MCF 10A (cell line): ENCODE measurements at regions of chr17 and their contacts with region 1.

Region 1: DNA sequence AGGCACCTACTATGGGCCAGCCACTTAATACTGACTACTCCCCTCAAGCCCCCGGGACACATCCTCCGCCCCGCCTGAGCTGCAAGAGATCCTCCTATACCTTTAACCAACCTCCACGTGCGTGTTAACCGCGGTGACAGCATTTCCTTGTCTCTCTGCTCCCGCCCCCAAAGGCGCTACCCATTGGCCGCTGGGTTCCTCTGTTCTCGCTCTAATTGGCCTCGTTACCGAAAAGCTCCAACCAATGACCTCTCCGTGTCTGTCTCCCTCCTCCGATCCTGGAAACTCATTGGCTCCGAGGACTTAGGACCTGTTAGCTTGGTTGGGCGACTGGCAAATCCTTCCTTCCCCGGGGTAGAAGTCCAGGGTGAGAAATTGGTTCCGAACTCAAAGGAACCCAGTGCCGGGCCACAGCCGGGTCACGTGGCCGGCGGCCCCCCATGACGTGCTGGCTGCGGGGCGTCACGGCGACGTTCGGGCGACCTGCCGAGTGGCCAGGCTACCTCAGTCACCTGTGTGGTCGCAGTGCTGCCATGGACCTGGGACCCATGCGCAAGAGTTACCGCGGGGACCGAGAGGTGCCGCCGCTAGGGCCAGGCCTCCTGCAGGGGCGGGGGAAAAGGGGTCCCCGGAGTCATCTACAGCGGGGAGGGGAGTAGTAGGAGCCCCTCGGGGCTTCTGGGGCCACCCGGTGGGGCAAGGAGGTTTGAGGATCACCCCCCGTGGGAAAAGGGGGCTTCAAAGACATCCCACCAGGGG is at the start of gene PNPO:
- DNase-seq: peak; percentile 99
- H3K4me3 Mint-ChIP-seq: peak within 1 kb of the TSS; percentile 82
- H3K27ac Mint-ChIP-seq: peak within 1 kb of the TSS; percentile 88
- H3K4me1 Mint-ChIP-seq: peaks cover 42% of the 10 kb centered on the region
- H3K27me3 Mint-ChIP-seq: no peaks in the 10 kb centered on the region
- CTCF ChIP-seq: no peak
- total RNA-seq, gene PNPO: 56.8 and 58.4 TPM in 2 replicates

Region 2: DNA sequence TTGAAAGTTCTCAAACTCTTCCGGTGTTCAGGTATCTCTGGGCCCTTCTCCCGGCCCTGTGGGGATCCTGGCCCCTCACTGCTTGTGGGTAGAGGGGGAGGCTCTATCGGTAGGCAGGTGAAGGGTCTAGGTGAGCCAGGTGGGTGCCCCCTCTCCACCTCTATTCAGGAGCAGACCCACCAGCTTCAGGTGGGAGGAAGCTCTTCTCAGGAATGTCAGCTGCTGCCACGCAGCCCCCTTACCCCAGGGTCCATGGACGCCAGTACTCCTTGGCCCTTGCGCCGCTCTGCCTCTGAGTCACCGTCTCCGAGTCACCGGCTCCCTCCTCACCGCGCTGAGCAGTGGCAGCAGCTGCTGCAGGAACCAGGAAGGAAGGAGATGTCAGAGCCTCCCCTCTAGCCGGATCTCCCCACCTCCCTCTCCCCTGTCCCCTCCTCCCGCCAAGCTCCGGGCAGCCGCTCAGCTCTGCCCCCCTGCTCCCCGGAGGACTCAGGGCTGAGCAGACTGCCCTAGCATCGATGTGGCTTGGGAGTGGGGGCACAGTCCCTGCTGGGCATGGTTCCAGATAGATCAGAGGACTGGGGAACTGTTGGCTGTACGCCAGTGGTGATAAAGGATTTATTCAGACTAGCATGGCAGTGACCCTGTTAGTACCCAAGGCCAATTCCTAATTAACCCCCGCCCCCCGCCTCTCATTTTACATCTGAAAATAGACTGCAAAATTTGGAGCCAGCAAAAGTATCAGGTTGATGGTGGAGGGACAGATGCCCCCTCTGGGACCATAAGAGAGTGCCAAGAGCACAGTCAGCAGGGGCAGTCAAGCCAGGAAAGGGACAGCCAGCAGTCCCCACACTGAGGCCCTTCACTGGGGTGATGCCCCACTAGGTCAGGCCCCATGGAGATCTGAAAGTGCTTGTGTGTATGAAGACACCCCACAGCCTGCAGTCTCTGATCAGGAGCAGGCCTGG is 119.7 kb before region 1 on chr17 and contains the start of gene OSBPL7:
- CTCF ChIA-PET with region 1: no interaction called
- POLR2A ChIA-PET with region 1: no interaction called
- intact Hi-C with region 1: no loop called
- DNase-seq: peak; percentile 67
- H3K4me3 Mint-ChIP-seq: peak within 1 kb of the TSS; percentile 84
- H3K27ac Mint-ChIP-seq: peak within 1 kb of the TSS; percentile 69
- H3K4me1 Mint-ChIP-seq: peaks cover 23% of the 10 kb centered on the region
- H3K27me3 Mint-ChIP-seq: no peaks in the 10 kb centered on the region
- CTCF ChIP-seq: no peak
- total RNA-seq, gene OSBPL7: 4.3 and 4.7 TPM in 2 replicates

Region 3: DNA sequence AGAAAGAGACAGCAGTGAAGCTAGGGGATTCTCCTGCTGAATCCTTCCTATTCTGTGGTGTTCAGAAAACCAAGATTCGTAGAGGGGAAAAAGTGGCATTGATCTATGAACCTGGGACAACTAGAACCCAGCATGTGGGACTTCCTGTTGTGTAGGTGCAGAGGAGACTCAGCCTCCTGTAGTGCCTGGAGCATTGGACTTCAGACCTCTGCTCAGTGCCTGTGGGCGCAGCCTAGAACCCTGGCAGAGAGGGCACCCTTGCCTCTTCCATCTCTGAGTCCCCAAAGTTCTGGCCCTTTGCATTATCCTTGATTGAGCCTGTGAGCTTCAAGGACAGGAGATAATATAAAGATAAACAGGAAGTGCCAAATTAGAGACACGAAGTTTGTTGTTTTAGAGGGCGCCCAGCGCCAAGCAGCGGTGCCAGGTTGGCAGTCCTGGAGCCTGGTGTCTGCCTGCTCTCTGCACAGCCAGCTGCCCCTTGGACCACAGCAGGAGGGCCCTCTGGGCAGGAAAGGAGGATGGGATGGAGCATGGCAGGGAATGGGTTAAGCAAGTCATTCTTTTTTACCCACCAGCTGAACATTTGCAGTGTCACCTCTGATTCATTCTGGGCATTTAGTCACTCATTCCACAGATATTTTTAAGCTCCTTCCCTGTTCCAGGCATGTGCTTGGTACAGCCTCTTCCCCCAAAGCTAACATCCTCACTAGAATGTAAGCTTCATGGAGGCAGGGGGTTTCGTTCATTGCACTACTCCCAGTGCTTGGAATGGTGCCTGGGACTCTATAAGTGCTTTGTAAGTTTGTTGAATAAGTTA is 78.6 kb before region 1 on chr17:
- CTCF ChIA-PET with region 1: no interaction called
- POLR2A ChIA-PET with region 1: no interaction called
- intact Hi-C with region 1: no loop called
- DNase-seq: peak; percentile 53
- H3K4me3 Mint-ChIP-seq: no peak overlapping the region
- H3K27ac Mint-ChIP-seq: peak overlapping the region; percentile 4
- H3K4me1 Mint-ChIP-seq: peaks cover 21% of the 10 kb centered on the region
- H3K27me3 Mint-ChIP-seq: no peaks in the 10 kb centered on the region
- CTCF ChIP-seq: no peak

Region 4: GRCh38 chr17:47889734-47890529 is 51.5 kb before region 1 on chr17:
- CTCF ChIA-PET with region 1: interaction called, 17 read pairs
- POLR2A ChIA-PET with region 1: interaction called, 117 read pairs
- intact Hi-C with region 1: no loop called
- DNase-seq: peak; percentile 81
- H3K4me3 Mint-ChIP-seq: no peak overlapping the region
- H3K27ac Mint-ChIP-seq: no peak overlapping the region
- H3K4me1 Mint-ChIP-seq: peaks cover 15% of the 10 kb centered on the region
- H3K27me3 Mint-ChIP-seq: no peaks in the 10 kb centered on the region
- CTCF ChIP-seq: peak; percentile 90

Region 5: DNA sequence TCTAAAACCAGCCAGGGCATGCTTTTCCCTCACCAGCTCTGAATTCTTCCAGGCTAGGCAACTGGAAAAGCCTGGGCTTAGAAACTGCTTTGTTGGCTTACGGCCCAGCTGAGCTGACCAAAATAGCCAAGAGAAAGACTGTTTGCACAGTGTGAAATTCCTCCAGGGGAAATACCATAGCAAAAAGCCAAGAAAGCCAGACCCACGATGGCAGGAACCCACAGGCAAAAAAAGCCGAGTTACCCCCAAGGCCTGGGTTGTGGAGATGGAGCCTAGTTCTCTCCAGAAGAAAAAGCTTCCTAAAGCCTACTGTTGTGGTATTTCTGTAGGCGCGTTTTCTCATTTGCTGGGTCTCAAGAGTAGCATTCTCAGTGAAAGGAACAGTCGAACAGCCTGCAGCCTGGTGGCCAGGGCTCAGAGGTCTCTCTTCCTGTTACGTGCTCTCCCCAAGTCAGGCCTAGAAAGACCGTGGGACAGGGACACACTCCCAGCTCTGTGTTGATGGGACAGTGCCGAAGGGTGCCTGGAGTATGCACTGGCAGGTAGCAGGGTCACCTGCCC is 36.1 kb before region 1 on chr17:
- CTCF ChIA-PET with region 1: interaction called, 7 read pairs
- POLR2A ChIA-PET with region 1: interaction called, 20 read pairs
- intact Hi-C with region 1: no loop called
- DNase-seq: peak; percentile 33
- H3K4me3 Mint-ChIP-seq: no peak overlapping the region
- H3K27ac Mint-ChIP-seq: peak overlapping the region; percentile 21
- H3K4me1 Mint-ChIP-seq: peaks cover 30% of the 10 kb centered on the region
- H3K27me3 Mint-ChIP-seq: no peaks in the 10 kb centered on the region
- CTCF ChIP-seq: no peak

Region 6: GRCh38 chr17:47914306-47914948 is 27.0 kb before region 1 on chr17:
- CTCF ChIA-PET with region 1: interaction called, 5 read pairs
- POLR2A ChIA-PET with region 1: interaction called, 10 read pairs
- intact Hi-C with region 1: no loop called
- DNase-seq: no peak
- H3K4me3 Mint-ChIP-seq: no peak overlapping the region
- H3K27ac Mint-ChIP-seq: no peak overlapping the region
- H3K4me1 Mint-ChIP-seq: peaks cover 7% of the 10 kb centered on the region
- H3K27me3 Mint-ChIP-seq: no peaks in the 10 kb centered on the region
- CTCF ChIP-seq: no peak

Region 7: DNA sequence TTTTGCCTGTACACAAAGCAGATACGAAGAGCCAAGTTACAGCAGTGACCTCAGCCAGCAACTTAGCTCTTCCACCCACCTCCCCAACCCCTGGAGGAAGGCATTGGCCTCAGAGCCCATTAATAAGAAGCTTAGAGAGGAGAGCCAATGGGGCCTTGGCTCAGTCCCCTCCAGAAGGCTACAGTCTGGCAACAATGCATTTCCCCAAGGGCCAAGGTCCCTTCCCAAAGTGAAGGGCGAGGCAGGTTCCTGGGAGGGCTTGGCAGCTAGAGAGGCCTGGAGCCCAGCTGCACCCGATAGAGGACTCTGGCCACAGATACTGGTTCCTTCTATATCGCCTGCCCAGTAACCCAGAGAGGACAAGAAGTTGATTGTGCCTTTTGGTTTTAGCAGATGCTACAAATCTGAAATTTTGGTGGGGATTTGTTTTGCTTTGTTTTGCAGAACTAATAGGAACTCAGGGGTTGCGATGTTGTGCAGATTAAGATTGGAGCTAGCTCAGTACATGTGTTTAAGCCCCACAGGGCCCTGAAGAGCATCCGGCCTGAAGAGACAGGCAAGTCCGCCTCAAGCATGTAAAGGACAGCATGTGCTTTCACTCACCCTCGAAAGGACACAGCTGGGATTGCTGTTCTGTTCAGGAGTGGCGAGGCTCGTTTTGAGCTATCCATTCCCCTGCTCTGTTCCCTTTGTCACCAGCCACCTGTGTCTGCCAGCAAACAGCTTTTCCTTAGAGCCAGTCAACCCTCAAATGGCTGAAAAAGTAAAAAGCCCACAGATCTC is 12.0 kb before region 1 on chr17:
- CTCF ChIA-PET with region 1: interaction called, 7 read pairs
- POLR2A ChIA-PET with region 1: interaction called, 11 read pairs
- intact Hi-C with region 1: no loop called
- DNase-seq: no peak
- H3K4me3 Mint-ChIP-seq: no peak overlapping the region
- H3K27ac Mint-ChIP-seq: no peak overlapping the region
- H3K4me1 Mint-ChIP-seq: peaks cover 6% of the 10 kb centered on the region
- H3K27me3 Mint-ChIP-seq: no peaks in the 10 kb centered on the region
- CTCF ChIP-seq: no peak

Region 8: DNA sequence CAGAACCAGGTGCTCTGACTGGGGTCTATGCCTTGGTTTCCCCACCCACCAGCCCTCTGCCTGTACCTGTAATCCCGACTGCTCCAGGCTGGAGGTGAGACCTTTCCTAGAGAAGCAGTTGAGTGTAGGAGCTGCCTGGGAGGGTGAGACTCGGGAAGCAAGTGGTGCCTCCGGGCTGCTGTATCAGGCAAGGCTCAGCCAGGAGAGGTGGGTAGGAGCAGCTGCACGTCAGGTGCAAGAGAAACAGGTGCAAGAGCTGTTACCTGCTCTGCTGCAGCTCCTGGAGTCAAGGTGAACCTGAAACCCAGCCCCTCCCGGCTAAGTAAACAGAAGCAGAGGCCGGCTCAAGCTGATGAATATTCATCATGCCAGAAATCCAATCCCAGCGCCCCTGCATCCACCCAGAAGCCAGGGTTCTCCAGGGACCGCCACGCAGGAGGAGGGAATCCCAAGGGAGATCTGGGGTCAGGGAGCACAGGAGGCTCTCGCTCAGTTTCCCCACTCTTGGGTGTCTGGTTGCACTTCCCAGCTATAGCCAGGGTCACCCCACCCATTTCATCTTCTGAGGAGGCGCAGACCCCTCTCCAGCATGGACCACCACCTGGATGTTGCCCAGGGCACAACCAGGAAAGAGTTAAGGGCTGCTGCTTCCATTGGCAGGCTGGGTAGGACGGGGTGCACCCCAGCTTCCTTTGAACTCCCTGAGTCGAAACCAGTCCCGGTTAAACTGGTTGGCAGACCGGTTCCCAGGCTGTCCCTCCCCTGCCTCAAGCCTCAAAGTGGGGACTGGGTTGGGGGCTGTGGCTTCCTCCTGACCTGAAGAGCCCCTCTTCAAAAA is 16.4 kb after region 1 on chr17 and contains the start of gene PRR15L:
- CTCF ChIA-PET with region 1: interaction called, 73 read pairs
- POLR2A ChIA-PET with region 1: interaction called, 21 read pairs
- intact Hi-C with region 1: no loop called
- DNase-seq: peak; percentile 59
- H3K4me3 Mint-ChIP-seq: peak within 1 kb of the TSS; percentile 41
- H3K27ac Mint-ChIP-seq: no peak within 1 kb of the TSS
- H3K4me1 Mint-ChIP-seq: peaks cover 30% of the 10 kb centered on the region
- H3K27me3 Mint-ChIP-seq: no peaks in the 10 kb centered on the region
- CTCF ChIP-seq: no peak
- total RNA-seq, gene PRR15L: not detected in 2 replicates

Region 9: GRCh38 chr17:47970704-47971463 is 29.5 kb after region 1 on chr17 and contains the start of gene CDK5RAP3:
- CTCF ChIA-PET with region 1: interaction called, 336 read pairs
- POLR2A ChIA-PET with region 1: interaction called, 35 read pairs
- intact Hi-C with region 1: no loop called
- DNase-seq: peak; percentile 99
- H3K4me3 Mint-ChIP-seq: peak within 1 kb of the TSS; percentile 94
- H3K27ac Mint-ChIP-seq: peak within 1 kb of the TSS; percentile 88
- H3K4me1 Mint-ChIP-seq: peaks cover 29% of the 10 kb centered on the region
- H3K27me3 Mint-ChIP-seq: no peaks in the 10 kb centered on the region
- CTCF ChIP-seq: peak; percentile 91
- total RNA-seq, gene CDK5RAP3: 132 and 149 TPM in 2 replicates

Region 10: GRCh38 chr17:48219617-48220016 is 278.2 kb after region 1 on chr17:
- CTCF ChIA-PET with region 1: no interaction called
- POLR2A ChIA-PET with region 1: no interaction called
- intact Hi-C with region 1: no loop called
- DNase-seq: no peak
- H3K4me3 Mint-ChIP-seq: no peak overlapping the region
- H3K27ac Mint-ChIP-seq: no peak overlapping the region
- H3K4me1 Mint-ChIP-seq: no peaks in the 10 kb centered on the region
- H3K27me3 Mint-ChIP-seq: peaks cover 81% of the 10 kb centered on the region
- CTCF ChIP-seq: no peak